ENCODE measurements at regions of chr12 and their contacts with region 1.

Region 1: GRCh38 chr12:19186722-19187661 is 57.5 kb downstream of the PLEKHA5 start:
- DNase-seq: no peak
- ATAC-seq: peak; percentile 59

Region 2: DNA sequence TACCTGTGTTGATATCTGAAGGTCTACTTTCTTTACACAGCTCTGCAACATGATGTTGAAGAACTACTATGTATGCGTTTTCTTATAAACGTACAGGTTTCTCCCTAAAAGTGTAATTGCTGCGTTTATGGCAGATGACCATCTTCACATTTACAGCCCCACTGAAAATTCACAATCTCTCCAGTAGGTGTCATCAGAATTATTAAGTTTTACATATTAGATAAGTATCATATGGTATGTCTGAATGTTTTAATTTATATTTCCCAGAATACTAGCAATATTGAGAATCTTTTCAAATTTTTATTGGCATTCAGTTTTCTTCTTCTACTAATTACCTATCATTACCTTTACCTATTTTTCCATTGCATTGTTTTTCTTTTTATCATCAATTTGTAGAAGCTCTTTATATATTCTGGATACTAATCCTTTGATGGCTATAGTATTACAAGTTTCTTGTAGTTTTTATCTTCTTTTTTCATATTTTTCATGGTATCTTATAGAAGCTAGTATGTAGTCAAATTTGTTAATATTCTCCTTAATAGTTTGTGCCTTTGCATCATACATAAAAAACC is 325.6 kb before region 1 on chr12:
- intact Hi-C with region 1: loop called (anchors 10 kb)
- DNase-seq: no peak
- ATAC-seq: no peak

Measured in Right ventricle myocardium superior (tissue), 1 donor.